GM18951 (cell line): ENCODE measurements at regions of chr12 and their contacts with region 1.

Region 1: DNA sequence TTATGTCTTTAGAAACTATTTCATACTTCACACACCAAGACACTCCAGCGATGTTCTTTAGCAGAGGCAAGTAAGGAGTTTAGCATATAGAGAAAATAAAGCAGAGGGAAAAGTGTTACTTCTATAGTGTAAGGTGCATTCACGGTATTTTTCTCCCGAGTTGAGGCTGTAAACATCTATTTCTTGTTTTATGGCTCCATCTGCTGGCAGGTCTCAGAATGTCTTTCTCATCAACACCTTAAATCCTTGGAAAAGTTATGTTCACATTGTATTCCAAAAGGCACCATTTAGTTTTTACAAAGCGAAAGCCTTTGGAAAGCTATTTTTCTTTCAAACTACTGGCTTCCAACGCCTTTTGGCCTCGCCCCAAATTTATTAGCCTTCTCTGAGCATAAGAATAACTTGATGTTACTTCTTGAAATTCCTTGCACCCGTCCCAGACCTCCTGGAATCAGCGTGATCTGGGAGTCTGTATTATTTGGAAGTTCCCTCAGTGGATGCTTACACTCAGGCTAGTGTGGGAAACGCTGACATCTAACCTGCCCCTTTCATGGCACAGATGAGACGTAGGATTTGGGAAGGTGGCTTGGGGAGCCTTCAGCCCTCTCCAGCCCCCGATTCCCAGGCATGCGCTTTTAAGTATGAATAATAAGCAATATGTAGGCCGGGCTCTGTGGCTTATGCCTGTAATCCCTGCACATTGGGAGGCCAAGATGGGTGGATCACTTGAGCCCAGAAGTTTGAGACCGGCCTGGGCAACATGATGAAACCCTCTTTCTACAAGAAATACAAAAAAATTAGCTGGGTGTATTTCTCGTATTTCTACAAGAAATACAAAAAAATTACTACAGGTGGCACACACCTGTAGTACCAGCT is 1.9 kb upstream of the PIWIL1 start:
- POLR2A ChIP-seq: no peak

Region 2: GRCh38 chr12:130031571-130032189 is 304.1 kb before region 1 on chr12:
- in situ Hi-C with region 1: loop called (anchors 25 kb)
- POLR2A ChIP-seq: no peak

Region 3: GRCh38 chr12:130423991-130424857 is 88.5 kb after region 1 on chr12:
- in situ Hi-C with region 1: no loop called
- POLR2A ChIP-seq: no peak